H1 (cell line): ENCODE measurements at regions of chr12 and their contacts with region 1.

Region 1: DNA sequence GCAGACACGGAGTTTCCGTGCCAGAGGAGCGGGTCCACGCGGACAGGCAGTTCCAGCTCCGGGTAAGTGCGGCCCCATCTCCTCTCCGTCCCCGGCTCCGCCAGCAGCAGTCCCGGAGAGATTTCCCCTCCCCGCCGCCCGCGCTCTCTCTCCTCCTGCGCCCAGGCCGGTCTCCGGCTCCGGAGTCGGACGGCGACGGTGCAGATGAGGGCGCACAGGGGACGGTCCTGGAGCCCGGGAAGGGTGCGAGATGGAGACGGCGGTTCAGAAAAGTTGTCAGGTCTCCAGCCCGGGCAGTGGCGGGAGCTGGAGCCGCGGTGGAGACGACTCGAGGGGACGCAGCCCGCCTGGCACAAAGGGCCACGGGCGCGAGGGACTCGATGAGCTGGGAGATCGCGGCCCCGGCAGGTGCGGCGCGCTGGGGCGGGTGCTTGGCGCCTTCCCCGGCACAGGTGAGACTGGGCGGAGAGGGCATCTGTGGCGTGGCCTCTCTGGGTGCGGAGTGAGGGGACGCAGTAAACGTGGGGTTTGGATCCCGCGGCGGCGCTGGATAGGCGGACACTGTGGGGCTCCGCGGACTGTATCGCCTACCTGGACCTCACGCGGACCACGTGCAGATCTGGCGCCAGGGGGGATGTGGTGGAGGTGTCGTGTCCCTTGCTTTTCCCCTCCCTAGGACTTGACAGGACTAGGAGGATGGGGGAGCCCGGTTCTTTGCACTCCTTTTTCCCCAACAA is 1540.3 kb upstream of the TMEM132C start:
- DNase-seq: peak in 1 of 2 experiments; percentile 71
- H3K4me3 ChIP-seq: peak overlapping the region; percentile 45 to 64 (median 52)
- H3K27ac ChIP-seq: no peak overlapping the region
- H3K4me1 ChIP-seq: peaks cover 0 to 21% (median 10%) of the 10 kb centered on the region in 4 experiments; a peak in 6 of 7 replicates
- H3K27me3 ChIP-seq: peaks cover 28 to 46% (median 40%) of the 10 kb centered on the region in 4 experiments
- CTCF ChIP-seq: no peak
- EP300 ChIP-seq: no peak
- POLR2A ChIP-seq: no peak
- RAD21 ChIP-seq: no peak

Region 2: DNA sequence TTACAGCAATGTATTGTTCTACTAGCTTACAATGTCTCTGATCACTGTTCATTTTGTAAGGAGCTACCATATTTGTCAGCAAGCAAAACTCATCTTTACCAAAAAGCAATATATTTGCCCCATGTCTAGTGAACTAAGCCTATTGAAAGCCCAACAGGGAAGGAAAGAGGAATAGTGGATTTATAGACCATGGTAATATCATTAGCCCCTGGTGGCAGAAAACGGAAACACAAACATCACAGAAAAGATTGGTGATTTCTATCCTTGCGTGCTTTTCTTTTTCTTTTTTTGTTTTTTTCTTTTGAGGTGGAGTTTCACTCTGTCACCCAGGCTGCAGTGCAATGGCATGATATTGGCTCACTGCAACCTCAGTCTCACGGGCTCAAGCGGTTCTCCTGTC is 22.0 kb before region 1 on chr12:
- CTCF ChIA-PET with region 1: interaction called, 10 read pairs
- POLR2A ChIA-PET with region 1: no interaction called
- DNase-seq: peak in 1 of 2 experiments; percentile 48
- H3K4me3 ChIP-seq: no peak overlapping the region
- H3K27ac ChIP-seq: no peak overlapping the region
- H3K4me1 ChIP-seq: no peaks in the 10 kb centered on the region
- H3K27me3 ChIP-seq: no peaks in the 10 kb centered on the region
- CTCF ChIP-seq: peak in 1 of 3 experiments; percentile 48; a peak in 2 of 4 replicates
- EP300 ChIP-seq: no peak
- POLR2A ChIP-seq: no peak
- RAD21 ChIP-seq: peak; percentile 25 to 31; a peak in 1 of 4 replicates